Heart right ventricle (tissue), 16 donors: ENCODE measurements at regions of chr14 and their contacts with region 1.

Region 1: DNA sequence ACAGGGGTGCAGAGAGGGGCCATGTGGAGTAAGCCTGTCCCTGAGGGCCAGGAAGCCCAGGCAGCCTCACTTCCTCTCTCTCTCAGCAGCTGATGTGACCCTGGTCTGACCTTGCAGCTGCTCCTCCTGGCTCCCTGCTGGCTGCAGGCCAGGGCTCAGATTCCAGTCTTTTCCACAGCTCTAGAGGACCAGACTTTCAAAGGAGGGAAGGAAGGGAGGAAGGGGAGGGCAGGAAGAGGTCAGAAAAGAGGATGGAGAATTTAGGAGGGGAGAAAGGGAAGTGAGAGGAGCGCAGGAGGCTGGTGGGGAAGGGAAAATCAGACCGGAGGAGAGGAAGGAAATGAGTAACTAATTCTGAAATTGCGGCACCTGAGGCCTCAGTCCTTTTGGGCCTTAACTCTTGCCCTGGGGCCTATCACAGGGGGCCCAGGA is 40.9 kb upstream of the VASH1 start:
- DNase-seq: peak; percentile 88 to 90
- ATAC-seq: peak; percentile 78 to 91 (median 85)
- H3K4me3 ChIP-seq: no peak overlapping the region
- H3K27ac ChIP-seq: peak overlapping the region in 9 of 10 donors; percentile 61 to 87 (median 73)
- H3K4me1 ChIP-seq: peaks cover 19 to 88% (median 69%) of the 10 kb centered on the region in 9 donors
- H3K27me3 ChIP-seq: no peaks in the 10 kb centered on the region
- CTCF ChIP-seq: no peak

Region 2: DNA sequence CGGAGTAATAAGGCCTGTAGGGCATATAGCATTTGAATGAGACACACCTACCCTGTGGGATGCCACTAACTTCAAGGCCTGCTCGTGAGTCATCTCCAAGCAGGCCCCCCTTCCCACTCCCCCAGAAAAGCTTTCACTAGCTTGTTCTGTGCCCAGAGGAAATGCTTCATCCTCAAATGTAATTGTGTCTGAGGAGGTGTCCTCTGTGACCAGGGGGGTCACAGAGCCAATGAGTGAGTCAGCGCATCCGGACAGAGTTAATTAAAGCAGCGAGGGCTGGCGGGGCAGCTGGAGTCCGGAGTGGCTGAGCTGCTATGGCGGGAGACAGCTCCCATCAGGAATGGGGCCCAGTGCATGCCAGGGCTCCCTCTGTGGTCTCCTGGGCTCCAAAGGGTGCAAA is 371.5 kb before region 1 on chr14:
- intact Hi-C with region 1: no loop called
- DNase-seq: peak; percentile 27 to 79
- ATAC-seq: peak; percentile 38 to 94 (median 86)
- H3K4me3 ChIP-seq: no peak overlapping the region
- H3K27ac ChIP-seq: peak overlapping the region in 1 of 10 donors; percentile 13
- H3K4me1 ChIP-seq: peaks cover 0 to 30% (median 14%) of the 10 kb centered on the region in 9 donors
- H3K27me3 ChIP-seq: peaks cover 0 to 11% (median 0%) of the 10 kb centered on the region in 7 donors
- CTCF ChIP-seq: no peak

Region 3: GRCh38 chr14:76375947-76376404 is 344.4 kb before region 1 on chr14 and contains the start of gene ESRRB:
- intact Hi-C with region 1: no loop called
- DNase-seq: no peak
- ATAC-seq: peak in 5 of 8 donors; percentile 34 to 68 (median 42)
- H3K4me3 ChIP-seq: peak within 1 kb of the TSS in 9 of 10 donors; percentile 14 to 48 (median 42)
- H3K27ac ChIP-seq: no peak within 1 kb of the TSS
- H3K4me1 ChIP-seq: peaks cover 3 to 23% (median 13%) of the 10 kb centered on the region in 9 donors
- H3K27me3 ChIP-seq: peaks cover 4 to 77% (median 55%) of the 10 kb centered on the region in 7 donors
- CTCF ChIP-seq: no peak
- total RNA-seq, gene ESRRB: 2.5 to 13.4 (median 7.4) TPM

Region 4: GRCh38 chr14:76761136-76761959 is 41.0 kb after region 1 on chr14 and contains the start of gene VASH1:
- intact Hi-C with region 1: loop called in 5 of 10 experiments (anchors 2 to 5 kb)
- DNase-seq: peak; percentile 74 to 85
- ATAC-seq: peak; percentile 71 to 90 (median 77)
- H3K4me3 ChIP-seq: peak within 1 kb of the TSS; percentile 69 to 93 (median 87)
- H3K27ac ChIP-seq: peak within 1 kb of the TSS; percentile 68 to 97 (median 93)
- H3K4me1 ChIP-seq: peaks cover 7 to 56% (median 44%) of the 10 kb centered on the region in 9 donors
- H3K27me3 ChIP-seq: peaks cover 0 to 21% (median 0%) of the 10 kb centered on the region in 7 donors
- CTCF ChIP-seq: no peak
- total RNA-seq, gene VASH1: 9.1 to 20.2 (median 12.9) TPM

Region 5: DNA sequence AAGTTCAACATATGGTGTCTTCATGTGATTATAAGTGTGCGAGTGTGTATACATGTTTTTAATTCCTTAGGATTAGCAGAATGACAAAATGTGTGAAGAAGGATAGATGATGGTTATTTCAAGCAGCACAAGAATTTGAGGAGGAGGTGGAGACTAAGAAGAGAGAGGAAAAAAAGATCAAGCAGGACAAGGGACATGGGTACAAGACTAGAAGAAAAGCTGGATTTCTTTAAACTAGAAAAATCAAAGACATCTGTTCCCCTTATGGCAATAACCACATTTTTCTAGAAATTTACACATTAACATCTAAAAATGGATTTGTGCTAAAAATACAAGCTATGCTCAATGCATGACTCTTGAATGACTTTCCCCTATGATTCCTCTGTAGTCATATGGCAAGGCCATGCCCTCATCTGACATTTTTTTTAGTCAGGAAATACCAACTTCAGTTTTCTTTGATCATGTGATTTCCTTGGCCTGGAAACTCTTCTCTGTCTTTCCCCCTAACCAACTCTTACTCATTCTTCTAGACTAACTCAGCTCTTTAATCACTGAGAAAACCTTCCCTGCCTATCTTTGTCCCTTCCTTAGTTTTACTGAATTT is 1885.6 kb after region 1 on chr14:
- intact Hi-C with region 1: no loop called
- DNase-seq: no peak
- ATAC-seq: no peak
- H3K4me3 ChIP-seq: no peak overlapping the region
- H3K27ac ChIP-seq: no peak overlapping the region
- H3K4me1 ChIP-seq: no peaks in the 10 kb centered on the region
- H3K27me3 ChIP-seq: peaks cover 0 to 11% (median 0%) of the 10 kb centered on the region in 7 donors
- CTCF ChIP-seq: no peak